CD4-positive, alpha-beta memory T cell (primary cell): ENCODE measurements at regions of chr5 and their contacts with region 1.

Region 1: DNA sequence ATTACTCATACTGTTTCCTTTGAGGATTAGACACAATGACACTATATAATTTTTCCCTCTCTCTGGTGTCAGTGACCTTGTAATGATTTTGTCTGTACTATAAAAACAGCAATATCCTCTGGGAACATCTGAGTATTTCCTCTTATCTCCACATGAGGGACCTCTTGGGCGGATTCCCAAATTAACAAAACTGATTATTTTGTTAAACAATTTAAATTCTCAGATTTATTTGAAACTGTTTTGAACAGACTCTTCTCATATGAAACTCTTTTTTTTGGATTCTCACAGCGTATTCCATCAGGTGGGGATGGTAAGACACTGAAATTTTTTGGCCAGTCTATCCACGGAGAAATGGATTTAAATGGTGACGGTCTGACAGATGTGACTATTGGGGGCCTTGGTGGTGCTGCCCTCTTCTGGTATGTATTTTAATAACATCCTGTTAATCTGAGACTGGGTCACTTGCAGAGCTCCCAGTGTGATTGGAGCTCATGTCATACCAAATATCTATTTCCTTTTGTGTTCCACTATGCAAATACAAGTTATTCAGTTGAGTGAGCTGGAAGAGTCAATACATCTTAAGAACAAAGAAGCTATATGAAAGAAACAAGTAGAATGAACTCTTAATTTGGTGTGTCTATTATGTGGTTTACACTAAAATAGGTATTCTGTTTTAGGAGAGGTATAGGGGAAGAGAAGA is 73.8 kb upstream of the ITGA2 start:
- DNase-seq: peak; percentile 41 to 72 (median 67)
- H3K4me3 ChIP-seq: no peak overlapping the region
- H3K4me3 Mint-ChIP-seq: peak overlapping the region in 7 of 8 donors; percentile 58 to 77 (median 74)
- H3K27ac ChIP-seq: no peak overlapping the region
- H3K27ac Mint-ChIP-seq: peak overlapping the region in 1 of 7 donors; percentile 39
- H3K4me1 ChIP-seq: peaks cover 5% of the 10 kb centered on the region
- H3K4me1 Mint-ChIP-seq: peaks cover 0 to 9% (median 2%) of the 10 kb centered on the region in 4 donors
- H3K27me3 ChIP-seq: no peaks in the 10 kb centered on the region
- H3K27me3 Mint-ChIP-seq: no peaks in the 10 kb centered on the region

Region 2: GRCh38 chr5:52632281-52632680 is 283.0 kb before region 1 on chr5:
- CTCF ChIA-PET with region 1: no interaction called
- POLR2A ChIA-PET with region 1: no interaction called
- intact Hi-C with region 1: no loop called
- DNase-seq: no peak
- H3K4me3 ChIP-seq: no peak overlapping the region
- H3K4me3 Mint-ChIP-seq: no peak overlapping the region
- H3K27ac ChIP-seq: no peak overlapping the region
- H3K27ac Mint-ChIP-seq: no peak overlapping the region
- H3K4me1 ChIP-seq: no peaks in the 10 kb centered on the region
- H3K4me1 Mint-ChIP-seq: no peaks in the 10 kb centered on the region
- H3K27me3 ChIP-seq: no peaks in the 10 kb centered on the region
- H3K27me3 Mint-ChIP-seq: peaks cover 10 to 24% of the 10 kb centered on the region in 2 donors

Region 3: GRCh38 chr5:52657247-52657645 is 258.1 kb before region 1 on chr5:
- CTCF ChIA-PET with region 1: interaction called, 12 read pairs
- POLR2A ChIA-PET with region 1: no interaction called
- intact Hi-C with region 1: loop called (anchors 2 kb)
- DNase-seq: peak in 4 of 5 donors; percentile 45 to 53 (median 51)
- H3K4me3 ChIP-seq: no peak overlapping the region
- H3K4me3 Mint-ChIP-seq: no peak overlapping the region
- H3K27ac ChIP-seq: no peak overlapping the region
- H3K27ac Mint-ChIP-seq: no peak overlapping the region
- H3K4me1 ChIP-seq: peaks cover 4% of the 10 kb centered on the region
- H3K4me1 Mint-ChIP-seq: no peaks in the 10 kb centered on the region
- H3K27me3 ChIP-seq: no peaks in the 10 kb centered on the region
- H3K27me3 Mint-ChIP-seq: peaks cover 3 to 12% of the 10 kb centered on the region in 2 donors

Region 4: DNA sequence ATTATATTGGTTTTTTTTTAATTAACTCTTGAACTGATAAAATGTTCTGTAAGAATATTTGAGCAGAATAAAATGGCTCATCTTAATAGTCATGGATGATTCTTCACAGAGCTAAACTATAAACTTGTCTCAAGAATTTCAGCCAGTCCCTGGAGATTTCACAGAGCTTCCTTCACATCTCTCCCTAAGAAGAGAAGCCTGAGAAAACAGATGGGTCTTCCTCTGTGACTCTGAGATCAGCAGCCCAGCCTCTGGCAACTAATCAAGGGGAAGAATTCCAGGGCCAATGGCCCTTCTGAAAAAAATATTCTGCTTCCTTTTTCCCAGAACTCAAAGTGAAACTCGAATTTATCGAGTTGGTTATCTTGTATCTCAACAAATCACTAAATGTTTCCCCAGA is 249.8 kb before region 1 on chr5:
- CTCF ChIA-PET with region 1: interaction called, 19 read pairs
- POLR2A ChIA-PET with region 1: no interaction called
- intact Hi-C with region 1: loop called (anchors 1 kb)
- DNase-seq: no peak
- H3K4me3 ChIP-seq: no peak overlapping the region
- H3K4me3 Mint-ChIP-seq: no peak overlapping the region
- H3K27ac ChIP-seq: no peak overlapping the region
- H3K27ac Mint-ChIP-seq: peak overlapping the region in 2 of 7 donors; percentile 42 to 75
- H3K4me1 ChIP-seq: no peaks in the 10 kb centered on the region
- H3K4me1 Mint-ChIP-seq: peaks cover 0 to 4% (median 3%) of the 10 kb centered on the region in 4 donors
- H3K27me3 ChIP-seq: no peaks in the 10 kb centered on the region
- H3K27me3 Mint-ChIP-seq: peaks cover 5 to 6% of the 10 kb centered on the region in 2 donors